Mucosa of descending colon (tissue), 3 donors: ENCODE measurements at regions of chr12 and their contacts with region 1.

Region 1: DNA sequence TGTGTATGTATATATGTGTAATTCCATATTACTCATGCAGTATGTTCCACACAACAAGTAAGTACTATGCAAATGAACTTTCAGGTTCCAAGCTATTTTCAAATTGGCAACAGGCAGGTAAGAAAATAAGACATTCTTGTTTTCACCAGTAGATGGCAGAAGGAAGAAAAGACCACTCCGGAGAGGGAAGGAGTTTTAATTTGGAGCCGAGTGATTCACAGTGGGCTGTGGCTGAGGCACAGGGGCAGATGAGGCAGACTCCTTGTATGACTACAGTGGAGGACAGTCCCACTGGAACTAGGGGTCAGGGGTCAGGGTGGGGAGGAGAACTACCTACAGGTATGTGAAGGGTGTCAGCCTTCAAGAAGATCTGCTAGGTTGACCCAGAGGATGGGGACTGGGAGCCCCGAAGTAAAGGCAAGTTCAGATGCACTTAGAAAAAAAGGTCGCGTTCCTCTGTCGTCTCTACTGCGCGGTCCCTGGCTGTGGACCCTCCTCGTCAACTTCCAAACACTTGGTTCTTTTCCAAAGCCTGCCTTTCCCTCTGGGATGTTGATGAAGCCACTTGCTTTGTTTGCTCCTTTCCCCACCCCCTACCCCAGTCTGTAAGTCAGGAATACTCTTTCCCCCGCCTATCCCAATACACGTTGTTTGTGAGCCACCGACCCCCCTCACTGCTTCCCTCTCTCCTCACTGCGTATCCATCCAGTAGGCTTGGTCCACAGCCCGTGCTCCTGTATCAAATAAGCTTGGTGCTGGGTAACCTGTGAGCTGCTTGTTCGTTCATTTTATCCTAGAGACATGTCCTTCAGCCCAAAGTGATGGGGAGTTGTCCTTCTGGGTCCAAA is 24.1 kb downstream of the DDX47 start:
- DNase-seq: peak; percentile 50 to 62 (median 58)
- ATAC-seq: peak; percentile 76
- H3K4me3 ChIP-seq: no peak overlapping the region
- H3K4me1 ChIP-seq: peaks cover 28% of the 10 kb centered on the region
- CTCF ChIP-seq: peak; percentile 12

Region 2: DNA sequence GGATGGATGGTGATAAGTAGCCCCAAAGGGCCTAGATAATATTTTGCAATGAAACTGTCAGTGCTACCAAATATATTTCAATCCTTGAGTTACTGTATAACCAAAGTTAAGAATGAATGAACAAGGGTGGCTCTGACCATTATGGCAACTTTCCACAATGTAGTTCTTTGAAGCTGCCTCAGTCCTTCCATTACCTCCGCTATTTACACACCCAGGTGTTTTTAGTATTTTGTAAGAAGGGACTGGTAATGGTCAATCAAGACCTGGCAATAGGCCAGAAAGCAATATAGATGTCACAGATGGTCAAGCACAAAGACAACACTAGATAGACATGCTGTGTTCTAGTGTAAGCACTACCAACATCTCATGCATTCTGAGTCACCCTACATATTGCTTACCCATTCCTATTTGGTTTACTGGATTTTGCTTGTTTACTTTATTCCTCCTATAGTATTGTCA is 290.9 kb before region 1 on chr12:
- intact Hi-C with region 1: no loop called
- DNase-seq: no peak
- ATAC-seq: peak; percentile 86
- H3K4me3 ChIP-seq: no peak overlapping the region
- H3K4me1 ChIP-seq: no peaks in the 10 kb centered on the region
- CTCF ChIP-seq: no peak

Region 3: GRCh38 chr12:12890815-12891645 is 53.8 kb after region 1 on chr12 and contains the start of gene GPRC5A:
- intact Hi-C with region 1: loop called in 1 of 2 experiments (anchors 5 kb)
- DNase-seq: peak; percentile 90 to 94 (median 92)
- ATAC-seq: peak; percentile 84
- H3K4me3 ChIP-seq: peak within 1 kb of the TSS; percentile 22
- H3K4me1 ChIP-seq: peaks cover 16% of the 10 kb centered on the region
- CTCF ChIP-seq: no peak
- total RNA-seq, gene GPRC5A: 136 to 326 (median 320) TPM